ENCODE measurements at regions of chr17 and their contacts with region 1.

Region 1: GRCh38 chr17:64658931-64659330 is 3.2 kb downstream of the SMURF2 start:
- DNase-seq: no peak
- ATAC-seq: no peak
- H3K4me3 ChIP-seq: no peak overlapping the region
- H3K27ac ChIP-seq: no peak overlapping the region
- H3K4me1 ChIP-seq: peaks cover 13% of the 10 kb centered on the region
- H3K27me3 ChIP-seq: no peaks in the 10 kb centered on the region
- CTCF ChIP-seq: no peak

Region 2: GRCh38 chr17:64306850-64307463 is 352.0 kb before region 1 on chr17:
- intact Hi-C with region 1: loop called in 1 of 2 experiments (anchors 10 kb)
- DNase-seq: peak; percentile 61 to 78
- ATAC-seq: peak in 3 of 4 donors; percentile 46 to 69 (median 50)
- H3K4me3 ChIP-seq: no peak overlapping the region
- H3K27ac ChIP-seq: no peak overlapping the region
- H3K4me1 ChIP-seq: no peaks in the 10 kb centered on the region
- H3K27me3 ChIP-seq: no peaks in the 10 kb centered on the region
- CTCF ChIP-seq: peak; percentile 82

Region 3: GRCh38 chr17:64534175-64534574 is 124.8 kb before region 1 on chr17:
- intact Hi-C with region 1: loop called in 1 of 2 experiments (anchors 10 kb)
- DNase-seq: no peak
- ATAC-seq: no peak
- H3K4me3 ChIP-seq: no peak overlapping the region
- H3K27ac ChIP-seq: no peak overlapping the region
- H3K4me1 ChIP-seq: no peaks in the 10 kb centered on the region
- H3K27me3 ChIP-seq: no peaks in the 10 kb centered on the region
- CTCF ChIP-seq: no peak

Region 4: GRCh38 chr17:64747938-64748540 is 89.1 kb after region 1 on chr17:
- intact Hi-C with region 1: no loop called
- DNase-seq: no peak
- ATAC-seq: no peak
- H3K4me3 ChIP-seq: no peak overlapping the region
- H3K27ac ChIP-seq: no peak overlapping the region
- H3K4me1 ChIP-seq: no peaks in the 10 kb centered on the region
- H3K27me3 ChIP-seq: no peaks in the 10 kb centered on the region
- CTCF ChIP-seq: no peak

Measured in psoas muscle (tissue), 8 donors.